MCF 10A (cell line): ENCODE measurements at regions of chr15 and their contacts with region 1.

Region 1: GRCh38 chr15:40454904-40455391 is 14.2 kb downstream of the BAHD1 start:
- DNase-seq: peak; percentile 78
- H3K4me3 Mint-ChIP-seq: peak overlapping the region; percentile 55
- H3K27ac Mint-ChIP-seq: peak overlapping the region; percentile 86
- H3K4me1 Mint-ChIP-seq: peaks cover 33% of the 10 kb centered on the region
- H3K27me3 Mint-ChIP-seq: no peaks in the 10 kb centered on the region
- CTCF ChIP-seq: no peak

Region 2: GRCh38 chr15:40440743-40441564 is 14.0 kb before region 1 on chr15 and contains the start of gene BAHD1:
- CTCF ChIA-PET with region 1: interaction called, 6 read pairs
- POLR2A ChIA-PET with region 1: interaction called, 25 read pairs
- intact Hi-C with region 1: no loop called
- DNase-seq: peak; percentile 91
- H3K4me3 Mint-ChIP-seq: peak within 1 kb of the TSS; percentile 89
- H3K27ac Mint-ChIP-seq: peak within 1 kb of the TSS; percentile 70
- H3K4me1 Mint-ChIP-seq: peaks cover 38% of the 10 kb centered on the region
- H3K27me3 Mint-ChIP-seq: peaks cover 7% of the 10 kb centered on the region
- CTCF ChIP-seq: no peak
- total RNA-seq, gene BAHD1: 14.9 and 15.1 TPM in 2 replicates

Region 3: DNA sequence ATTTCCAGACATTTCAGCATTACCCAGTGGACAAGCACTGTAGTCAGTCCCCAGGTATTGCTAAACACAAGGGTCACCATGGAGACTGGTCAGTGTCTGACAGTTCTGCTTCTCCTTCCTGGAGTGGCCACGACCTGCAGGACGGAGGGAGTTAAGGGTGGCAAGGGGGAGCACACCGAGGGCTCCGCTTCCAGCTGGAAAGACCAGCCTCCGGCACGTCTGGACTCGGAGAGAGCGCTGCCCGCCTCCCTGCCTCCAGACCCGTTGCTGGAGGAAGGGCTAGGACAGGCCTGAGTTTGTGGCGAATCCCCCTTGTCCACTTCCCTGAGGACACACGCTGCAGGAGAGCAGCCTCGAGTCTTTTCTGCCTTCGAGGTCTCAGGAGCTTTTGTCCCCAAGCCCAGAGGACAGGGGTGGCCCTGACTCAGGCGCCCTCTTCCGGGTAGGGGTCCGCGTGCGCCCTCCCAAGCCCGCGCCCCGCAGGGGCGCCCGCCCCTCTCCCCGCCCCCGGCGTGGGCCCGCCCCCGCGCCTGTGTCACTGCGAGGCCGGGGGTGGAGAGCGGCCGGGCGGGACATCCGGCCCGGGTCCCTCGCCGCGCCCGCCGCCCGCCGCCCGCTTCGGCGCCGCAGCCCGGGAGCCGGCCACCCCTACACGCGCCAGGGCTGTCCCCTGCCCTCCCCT is 15.6 kb after region 1 on chr15 and contains the start of gene CHST14:
- CTCF ChIA-PET with region 1: interaction called, 7 read pairs
- POLR2A ChIA-PET with region 1: interaction called, 12 read pairs
- intact Hi-C with region 1: no loop called
- DNase-seq: peak; percentile 27
- H3K4me3 Mint-ChIP-seq: peak within 1 kb of the TSS; percentile 69
- H3K27ac Mint-ChIP-seq: peak within 1 kb of the TSS; percentile 47
- H3K4me1 Mint-ChIP-seq: no peaks in the 10 kb centered on the region
- H3K27me3 Mint-ChIP-seq: no peaks in the 10 kb centered on the region
- CTCF ChIP-seq: no peak
- total RNA-seq, gene CHST14: 5.8 and 7.3 TPM in 2 replicates

Region 4: GRCh38 chr15:40506964-40507571 is 52.1 kb after region 1 on chr15:
- CTCF ChIA-PET with region 1: no interaction called
- POLR2A ChIA-PET with region 1: interaction called, 3 read pairs
- intact Hi-C with region 1: loop called (anchors 5 kb)
- DNase-seq: peak; percentile 69
- H3K4me3 Mint-ChIP-seq: no peak overlapping the region
- H3K27ac Mint-ChIP-seq: no peak overlapping the region
- H3K4me1 Mint-ChIP-seq: peaks cover 2% of the 10 kb centered on the region
- H3K27me3 Mint-ChIP-seq: no peaks in the 10 kb centered on the region
- CTCF ChIP-seq: peak; percentile 56